ENCODE measurements at regions of chr14 and their contacts with region 1.

Region 1: GRCh38 chr14:73503648-73504047 is 12.9 kb downstream of the RIOX1 start:
- DNase-seq: no peak
- H3K4me3 ChIP-seq: no peak overlapping the region
- CTCF ChIP-seq: no peak
- POLR2A ChIP-seq: no peak

Region 2: GRCh38 chr14:73633116-73634010 is 129.7 kb after region 1 on chr14:
- intact Hi-C with region 1: loop called (anchors 10 kb)
- DNase-seq: peak; percentile 47 to 90
- H3K4me3 ChIP-seq: peak overlapping the region; percentile 23
- CTCF ChIP-seq: peak in 1 of 3 donors; percentile 94
- POLR2A ChIP-seq: no peak